IMR-90 (cell line): ENCODE measurements at regions of chr1 and their contacts with region 1.

Region 1: GRCh38 chr1:90074137-90074536 is 79.2 kb downstream of the ZNF326 start:
- DNase-seq: no peak
- ATAC-seq: no peak
- H3K4me3 ChIP-seq: no peak overlapping the region
- H3K27ac ChIP-seq: no peak overlapping the region
- H3K4me1 ChIP-seq: no peaks in the 10 kb centered on the region
- H3K27me3 ChIP-seq: no peaks in the 10 kb centered on the region; the same call in 1 of the 2 replicates
- CTCF ChIP-seq: no peak
- POLR2A ChIP-seq: no peak
- RAD21 ChIP-seq: no peak

Region 2: DNA sequence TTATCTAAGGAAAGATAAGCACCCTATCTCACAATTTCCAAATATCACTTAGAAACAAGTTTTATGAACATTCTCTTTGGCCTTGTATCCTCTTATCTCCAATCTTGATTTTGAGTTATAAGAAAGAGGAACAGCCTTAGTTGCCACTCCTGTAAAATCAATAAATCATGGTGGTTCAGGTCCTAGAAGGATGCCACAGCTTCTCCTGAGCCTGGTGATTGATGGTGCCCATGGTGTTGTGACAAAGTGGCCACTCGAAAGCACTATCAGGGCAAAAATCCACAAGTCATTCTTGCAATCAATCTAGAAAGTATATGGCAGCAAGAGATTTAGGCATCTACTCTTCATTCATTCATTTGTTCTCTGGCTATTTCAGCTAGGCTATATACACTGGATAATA is 682.5 kb before region 1 on chr1:
- CTCF ChIA-PET with region 1: no interaction called
- POLR2A ChIA-PET with region 1: no interaction called
- dilution Hi-C with region 1: no loop called
- in situ Hi-C with region 1: no loop called
- intact Hi-C with region 1: loop called (anchors 5 kb)
- DNase-seq: no peak
- ATAC-seq: no peak
- H3K4me3 ChIP-seq: no peak overlapping the region
- H3K27ac ChIP-seq: no peak overlapping the region
- H3K4me1 ChIP-seq: no peaks in the 10 kb centered on the region
- H3K27me3 ChIP-seq: no peaks in the 10 kb centered on the region
- CTCF ChIP-seq: no peak
- POLR2A ChIP-seq: no peak
- RAD21 ChIP-seq: no peak